Esophagus muscularis mucosa (tissue), 4 donors: ENCODE measurements at regions of chr9 and their contacts with region 1.

Region 1: DNA sequence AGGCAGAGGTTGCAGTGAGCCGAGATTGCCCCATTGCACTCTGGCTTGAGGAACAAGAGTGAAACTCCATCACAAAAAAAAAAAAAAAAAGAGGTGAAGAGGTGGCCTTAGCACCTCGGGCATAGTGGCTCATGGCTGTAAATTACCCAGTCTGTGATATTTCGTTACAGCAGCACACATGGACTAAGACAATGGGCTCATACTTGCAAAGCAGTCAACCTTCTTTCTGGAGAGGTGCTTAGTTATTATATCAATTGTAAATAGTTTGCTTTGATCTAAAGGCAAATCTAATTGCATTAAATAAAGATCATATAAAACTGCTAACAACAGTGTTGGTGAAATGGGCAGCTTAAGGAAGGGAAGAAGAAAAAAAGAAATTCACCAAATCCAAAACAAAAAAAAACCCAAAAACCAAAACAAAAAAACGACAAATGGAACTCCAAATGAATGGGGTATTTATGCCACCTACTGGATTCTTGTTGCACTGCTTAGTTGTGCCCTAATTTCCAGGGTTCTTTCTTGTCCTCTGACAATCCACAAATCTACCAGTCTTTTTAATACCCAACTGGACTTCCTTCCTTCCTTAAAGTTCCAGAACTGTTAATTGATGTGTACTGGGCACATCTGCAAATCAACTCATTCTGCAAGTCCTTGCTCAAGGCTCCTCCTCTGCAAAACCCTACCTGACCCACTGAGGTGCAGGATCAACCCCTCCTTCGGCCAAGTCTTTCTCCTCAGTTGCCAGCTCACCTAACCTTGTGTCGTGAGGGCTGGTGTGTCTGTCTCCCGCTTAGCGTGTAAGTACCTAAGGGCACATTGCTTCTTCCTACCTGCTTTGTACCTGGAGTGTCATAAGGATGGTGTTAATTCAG is 35.0 kb upstream of the DMRT1 start:
- DNase-seq: no peak
- H3K4me3 ChIP-seq: no peak overlapping the region
- H3K27ac ChIP-seq: no peak overlapping the region
- H3K4me1 ChIP-seq: peaks cover 0 to 12% (median 9%) of the 10 kb centered on the region in 4 donors
- H3K27me3 ChIP-seq: no peaks in the 10 kb centered on the region
- CTCF ChIP-seq: peak; percentile 50 to 69 (median 66)
- EP300 ChIP-seq: no peak
- POLR2A ChIP-seq: no peak

Region 2: DNA sequence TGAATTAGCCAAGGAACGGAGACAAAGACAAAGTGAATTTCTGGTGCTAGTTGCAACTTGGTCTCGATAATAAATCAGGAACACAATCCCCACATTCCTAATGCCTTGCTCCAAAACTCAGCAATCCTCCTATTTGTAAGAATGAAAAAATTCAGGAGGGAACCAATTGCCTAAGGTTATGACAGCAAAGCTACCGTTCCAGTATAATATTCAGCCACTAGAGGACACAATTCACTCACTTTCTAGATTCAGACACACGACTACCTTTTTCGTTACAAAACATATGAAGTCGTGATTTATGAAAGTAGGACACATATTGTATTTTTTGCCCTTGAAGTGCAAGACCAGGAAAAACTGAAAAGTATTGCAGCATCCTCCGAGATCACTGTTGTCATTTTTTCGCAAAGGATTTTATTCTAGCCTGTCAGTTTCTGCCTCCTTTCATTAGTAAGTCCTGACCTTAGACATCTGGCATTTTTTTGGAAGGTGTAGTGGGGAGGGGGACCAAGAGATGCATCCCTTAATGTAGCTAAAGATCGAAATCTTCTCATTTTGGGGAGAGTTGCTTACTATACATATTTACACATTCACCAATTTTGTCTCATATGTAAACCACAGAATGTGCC is 458.7 kb before region 1 on chr9:
- intact Hi-C with region 1: loop called (anchors 10 kb)
- DNase-seq: no peak
- H3K4me3 ChIP-seq: no peak overlapping the region
- H3K27ac ChIP-seq: peak overlapping the region in 1 of 4 donors; percentile 62
- H3K4me1 ChIP-seq: peaks cover 0 to 23% (median 19%) of the 10 kb centered on the region in 4 donors
- H3K27me3 ChIP-seq: no peaks in the 10 kb centered on the region
- CTCF ChIP-seq: peak; percentile 61 to 79 (median 63)
- EP300 ChIP-seq: no peak
- POLR2A ChIP-seq: no peak

Region 3: DNA sequence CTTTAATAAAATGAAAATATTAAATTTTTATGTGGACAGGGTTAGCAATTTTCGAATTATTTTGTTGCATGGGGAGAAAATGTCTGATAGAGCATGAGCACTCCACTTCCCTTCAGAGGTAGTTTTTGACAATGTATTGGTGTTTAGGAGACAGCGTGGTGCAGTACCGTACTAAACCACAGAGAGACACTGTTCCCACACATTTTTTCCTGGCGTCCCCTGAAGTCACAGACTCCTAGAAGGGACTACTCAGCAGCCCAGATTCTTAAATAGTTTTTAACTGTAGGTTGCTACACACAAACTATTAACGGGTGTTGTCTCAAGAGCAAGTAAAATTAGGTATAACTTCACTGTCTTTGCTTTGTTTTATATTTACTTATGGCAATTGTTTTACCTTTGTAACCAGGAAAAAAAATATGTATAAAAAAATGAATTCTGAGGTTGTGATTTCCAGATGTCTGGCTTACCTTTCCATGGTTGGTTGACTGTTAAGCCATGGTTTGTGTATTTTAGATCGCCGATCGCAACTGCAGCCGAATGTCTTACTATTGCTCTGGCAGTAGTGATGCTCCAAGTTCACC is 420.6 kb before region 1 on chr9:
- intact Hi-C with region 1: loop called (anchors 10 kb)
- DNase-seq: no peak
- H3K4me3 ChIP-seq: no peak overlapping the region
- H3K27ac ChIP-seq: no peak overlapping the region
- H3K4me1 ChIP-seq: no peaks in the 10 kb centered on the region
- H3K27me3 ChIP-seq: no peaks in the 10 kb centered on the region
- CTCF ChIP-seq: peak; percentile 57 to 80 (median 62)
- EP300 ChIP-seq: no peak
- POLR2A ChIP-seq: no peak

Region 4: GRCh38 chr9:469672-470551 is 336.6 kb before region 1 on chr9:
- intact Hi-C with region 1: loop called (anchors 10 kb)
- DNase-seq: peak; percentile 96
- H3K4me3 ChIP-seq: peak overlapping the region; percentile 62 to 73 (median 64)
- H3K27ac ChIP-seq: peak overlapping the region; percentile 58 to 83 (median 74)
- H3K4me1 ChIP-seq: peaks cover 10 to 25% (median 21%) of the 10 kb centered on the region in 4 donors
- H3K27me3 ChIP-seq: no peaks in the 10 kb centered on the region
- CTCF ChIP-seq: no peak
- EP300 ChIP-seq: no peak
- POLR2A ChIP-seq: no peak

Region 5: DNA sequence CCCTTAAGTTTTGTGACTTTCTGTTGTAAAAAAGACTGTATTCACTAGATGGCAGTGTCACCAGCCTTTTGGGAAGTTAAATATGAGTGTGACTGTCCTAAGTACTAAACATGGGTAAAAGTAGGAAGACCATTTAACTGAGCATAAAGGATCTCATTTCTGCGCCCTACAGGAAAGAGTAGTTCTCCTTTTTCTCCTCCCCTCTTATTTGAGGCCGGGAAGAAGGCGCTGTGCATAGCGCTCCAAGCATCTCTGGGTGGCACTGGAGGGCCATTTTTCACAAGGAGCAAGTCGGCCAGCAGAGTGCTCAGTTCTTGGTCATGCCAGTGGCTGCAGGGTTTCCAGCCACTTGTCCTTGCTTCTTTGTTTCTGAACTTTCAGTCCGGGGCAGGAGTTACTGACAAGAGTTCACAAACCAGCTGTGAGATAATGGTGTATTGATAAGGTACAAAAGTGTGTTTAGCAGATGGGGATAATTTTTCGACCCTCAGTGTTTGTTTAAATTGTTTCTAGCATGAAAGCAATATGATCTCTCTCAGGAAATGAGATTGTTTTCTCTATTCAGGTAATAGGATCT is 192.7 kb before region 1 on chr9:
- intact Hi-C with region 1: loop called (anchors 5 kb)
- DNase-seq: no peak
- H3K4me3 ChIP-seq: peak overlapping the region in 2 of 4 donors; percentile 4 to 9
- H3K27ac ChIP-seq: peak overlapping the region; percentile 56 to 69 (median 66)
- H3K4me1 ChIP-seq: peaks cover 26 to 39% (median 31%) of the 10 kb centered on the region in 4 donors
- H3K27me3 ChIP-seq: no peaks in the 10 kb centered on the region
- CTCF ChIP-seq: peak; percentile 85 to 94 (median 89)
- EP300 ChIP-seq: no peak
- POLR2A ChIP-seq: no peak

Region 6: DNA sequence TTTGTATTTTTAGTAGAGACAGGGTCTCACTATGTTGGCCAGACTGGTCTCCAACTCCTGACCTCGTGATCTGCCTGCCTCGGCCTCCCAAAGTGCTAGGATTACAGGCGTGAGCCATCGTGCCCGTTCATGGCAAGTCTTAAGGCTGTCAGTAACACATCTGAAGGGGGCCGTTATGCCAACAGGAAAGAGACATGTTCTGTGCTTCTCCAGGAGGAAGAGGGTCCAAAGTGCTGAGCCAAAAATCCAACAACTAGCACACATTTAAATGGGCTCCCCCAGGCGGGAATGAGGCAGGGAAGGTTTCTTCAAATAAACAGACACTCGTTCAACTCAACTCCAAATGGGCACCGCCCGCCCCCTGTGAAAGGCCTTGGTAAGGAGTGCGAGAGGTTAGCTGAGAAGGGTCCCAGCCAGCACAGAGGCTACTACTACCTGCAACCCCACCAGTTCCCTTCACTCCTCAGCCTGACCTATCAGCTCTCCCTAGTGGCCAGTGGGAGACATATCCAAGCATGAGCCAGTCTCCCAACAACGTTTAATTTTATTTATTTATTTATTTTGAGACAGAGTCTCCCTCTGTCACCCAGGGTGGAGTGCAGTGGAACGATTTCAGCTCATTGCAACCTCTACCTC is 49.2 kb before region 1 on chr9:
- intact Hi-C with region 1: no loop called
- DNase-seq: peak; percentile 29
- H3K4me3 ChIP-seq: no peak overlapping the region
- H3K27ac ChIP-seq: no peak overlapping the region
- H3K4me1 ChIP-seq: peaks cover 6 to 17% (median 9%) of the 10 kb centered on the region in 4 donors
- H3K27me3 ChIP-seq: no peaks in the 10 kb centered on the region
- CTCF ChIP-seq: peak; percentile 48 to 77 (median 67)
- EP300 ChIP-seq: no peak
- POLR2A ChIP-seq: no peak